Activated CD8-positive, alpha-beta memory T cell treated with anti-CD3 and anti-CD28 coated beads, Interleukin-2, amount 10 ng/mL, durations not matched to agents 7 days and 5 days (primary cell): ENCODE measurements at regions of chr22 and their contacts with region 1.

Region 1: DNA sequence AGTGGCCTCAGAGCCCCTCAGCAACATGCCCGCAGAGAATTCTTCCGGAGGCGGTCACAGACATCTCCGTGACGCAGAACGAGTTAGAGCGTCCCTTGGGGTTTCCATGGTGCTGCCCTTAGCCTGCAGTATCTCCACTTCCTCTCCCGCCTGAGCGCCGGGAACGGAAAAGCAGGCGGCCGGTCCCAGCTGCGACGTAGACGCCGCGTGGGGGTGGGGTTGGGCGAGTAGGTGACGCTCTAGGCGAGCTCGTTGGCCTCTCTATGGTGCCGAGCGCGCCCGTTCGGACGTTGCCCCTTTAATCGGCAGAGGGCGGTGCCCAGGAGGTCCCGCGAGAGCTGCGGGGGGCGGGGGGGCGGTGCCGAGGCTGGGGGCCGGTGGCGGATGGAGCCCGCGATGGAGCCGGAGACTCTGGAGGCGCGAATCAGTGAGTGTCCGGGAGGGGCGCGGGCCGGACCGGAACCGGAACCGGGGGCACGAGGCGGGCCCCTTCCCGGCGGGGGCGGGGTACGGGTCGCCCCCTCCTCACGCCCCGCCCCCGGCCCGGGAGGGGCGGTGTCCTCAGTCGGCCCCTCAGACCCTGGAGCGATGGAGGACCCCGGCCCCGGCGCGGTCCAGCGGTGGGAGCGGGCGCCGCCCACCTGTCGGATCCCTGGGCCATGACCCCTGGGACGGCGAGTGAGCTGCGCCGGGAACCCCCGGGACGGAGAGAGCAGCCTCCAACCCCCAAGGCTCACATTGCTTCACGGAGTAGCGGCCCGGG is at the start of gene GGA1:
- DNase-seq: peak; percentile 99
- ATAC-seq: peak; percentile 80
- H3K4me3 Mint-ChIP-seq: peak within 1 kb of the TSS; percentile 89
- H3K27ac Mint-ChIP-seq: peak within 1 kb of the TSS; percentile 94
- H3K4me1 Mint-ChIP-seq: peaks cover 60% of the 10 kb centered on the region
- H3K27me3 Mint-ChIP-seq: no peaks in the 10 kb centered on the region
- total RNA-seq, gene GGA1: 76.9 to 85.9 TPM

Region 2: DNA sequence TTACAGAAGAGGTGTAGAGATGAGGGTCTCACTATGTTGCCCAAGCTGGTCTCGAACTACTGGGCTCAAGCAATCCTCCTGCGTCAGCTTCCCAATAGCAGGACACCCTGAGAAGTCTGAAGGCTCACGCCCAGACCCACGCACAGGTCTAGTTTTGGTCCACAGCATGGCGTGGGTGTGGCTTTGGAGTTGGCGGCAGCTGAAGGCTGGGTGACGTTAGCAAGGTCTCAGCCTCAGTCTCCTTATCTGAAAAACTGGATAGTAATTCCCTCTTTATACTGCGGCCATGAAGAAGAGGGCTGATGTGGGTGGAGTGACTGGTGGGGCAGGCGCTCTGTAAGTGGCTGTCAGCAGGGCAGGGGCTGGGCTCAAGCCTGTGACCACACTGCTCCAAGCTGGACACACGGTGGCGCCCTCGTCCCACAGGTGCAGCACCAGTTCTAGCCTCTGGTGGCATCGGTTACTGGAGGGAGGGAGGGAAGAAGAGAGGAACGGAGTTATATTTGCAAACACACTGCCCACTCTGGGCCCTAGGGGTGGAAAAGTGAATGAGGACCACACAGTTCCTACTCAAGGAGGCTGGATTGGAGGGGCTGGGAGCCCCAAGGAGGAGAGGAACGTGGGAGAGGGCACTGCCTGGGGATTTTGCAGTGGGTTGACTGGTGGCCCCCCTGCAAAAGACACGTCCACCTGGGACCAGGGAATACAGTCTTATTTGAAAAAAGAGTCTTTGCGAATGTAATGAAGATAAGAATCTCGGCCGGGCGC is 69.9 kb before region 1 on chr22:
- CTCF ChIA-PET with region 1: interaction called, 36 read pairs
- DNase-seq: peak; percentile 95
- ATAC-seq: peak; percentile 98
- H3K4me3 Mint-ChIP-seq: no peak overlapping the region
- H3K27ac Mint-ChIP-seq: peak overlapping the region; percentile 52
- H3K4me1 Mint-ChIP-seq: peaks cover 51% of the 10 kb centered on the region
- H3K27me3 Mint-ChIP-seq: peaks cover 19% of the 10 kb centered on the region

Region 3: GRCh38 chr22:37588546-37589215 is 20.0 kb before region 1 on chr22:
- CTCF ChIA-PET with region 1: interaction called, 104 read pairs
- DNase-seq: no peak
- ATAC-seq: no peak
- H3K4me3 Mint-ChIP-seq: no peak overlapping the region
- H3K27ac Mint-ChIP-seq: no peak overlapping the region
- H3K4me1 Mint-ChIP-seq: peaks cover 15% of the 10 kb centered on the region
- H3K27me3 Mint-ChIP-seq: peaks cover 20% of the 10 kb centered on the region

Region 4: GRCh38 chr22:37643225-37643847 is 34.7 kb after region 1 on chr22:
- CTCF ChIA-PET with region 1: interaction called, 156 read pairs
- DNase-seq: peak; percentile 90
- ATAC-seq: peak; percentile 52
- H3K4me3 Mint-ChIP-seq: peak overlapping the region; percentile 35
- H3K27ac Mint-ChIP-seq: peak overlapping the region; percentile 48
- H3K4me1 Mint-ChIP-seq: peaks cover 38% of the 10 kb centered on the region
- H3K27me3 Mint-ChIP-seq: no peaks in the 10 kb centered on the region

Region 5: GRCh38 chr22:37676736-37677492 is 68.3 kb after region 1 on chr22:
- CTCF ChIA-PET with region 1: interaction called, 98 read pairs
- DNase-seq: peak; percentile 96
- ATAC-seq: peak; percentile 70
- H3K4me3 Mint-ChIP-seq: peak overlapping the region; percentile 83
- H3K27ac Mint-ChIP-seq: peak overlapping the region; percentile 97
- H3K4me1 Mint-ChIP-seq: peaks cover 64% of the 10 kb centered on the region
- H3K27me3 Mint-ChIP-seq: no peaks in the 10 kb centered on the region

Region 6: DNA sequence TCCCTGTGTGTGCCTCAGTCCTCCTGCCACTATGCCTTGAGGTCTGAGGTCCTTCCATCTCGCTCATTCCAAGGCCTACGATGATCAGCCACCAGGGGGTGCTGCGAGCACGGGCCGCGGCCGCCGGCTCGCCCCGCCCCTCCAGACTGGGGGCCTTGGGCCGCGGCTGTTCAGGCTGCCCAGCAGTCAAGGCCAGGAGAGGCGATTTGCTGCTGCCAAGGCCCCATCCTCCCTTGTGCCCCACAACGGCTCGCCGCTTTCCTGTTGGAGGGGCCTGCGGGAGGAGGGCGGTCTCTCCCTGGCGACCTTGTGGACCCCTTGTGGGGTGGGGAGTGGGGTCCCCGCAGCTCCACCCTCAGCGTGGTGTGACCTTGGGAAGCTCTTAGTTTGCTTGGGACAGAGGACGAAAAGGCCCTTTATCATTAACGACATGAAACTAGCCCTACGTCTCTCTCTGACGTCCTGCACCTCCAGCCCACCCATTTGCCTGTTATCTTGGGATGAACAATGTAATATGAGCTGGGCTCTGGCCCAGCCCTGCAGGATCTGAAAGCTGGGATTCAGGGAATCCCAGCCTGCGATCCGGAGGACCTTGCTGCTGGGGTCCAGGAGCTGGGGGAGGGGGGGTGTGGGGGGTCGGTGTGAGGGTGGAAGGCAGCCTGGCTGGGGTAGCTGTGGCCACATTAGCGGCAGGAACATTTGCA is 209.2 kb after region 1 on chr22:
- CTCF ChIA-PET with region 1: no interaction called
- DNase-seq: peak; percentile 82
- ATAC-seq: peak; percentile 88
- H3K4me3 Mint-ChIP-seq: no peak overlapping the region
- H3K27ac Mint-ChIP-seq: no peak overlapping the region
- H3K4me1 Mint-ChIP-seq: peaks cover 16% of the 10 kb centered on the region
- H3K27me3 Mint-ChIP-seq: peaks cover 28% of the 10 kb centered on the region